K562 (cell line): ENCODE measurements at regions of chr4 and their contacts with region 1.

Region 1: GRCh38 chr4:6716018-6716911 is at the start of gene BLOC1S4:
- DNase-seq: peak; percentile 94 to 96 (median 95)
- ATAC-seq: peak; percentile 78
- H3K4me3 ChIP-seq: peak within 1 kb of the TSS; percentile 58
- H3K27ac ChIP-seq: peak within 1 kb of the TSS; percentile 94
- H3K4me1 ChIP-seq: peaks cover 22 to 23% of the 10 kb centered on the region in 2 experiments; a peak in 4 of 5 replicates
- H3K27me3 ChIP-seq: no peaks in the 10 kb centered on the region
- CTCF ChIP-seq: peak in 2 of 3 experiments; percentile 14 to 26; a peak in 2 of 6 replicates
- EP300 ChIP-seq: no peak
- POLR2A ChIP-seq: peak; percentile 81
- RAD21 ChIP-seq: 0 out of 4 replicates have a peak, but pooled peaks of 1 of the 2 experiments have one; percentile 13
- polyA plus RNA-seq, gene BLOC1S4: 3.1 to 3.9 TPM

Region 2: DNA sequence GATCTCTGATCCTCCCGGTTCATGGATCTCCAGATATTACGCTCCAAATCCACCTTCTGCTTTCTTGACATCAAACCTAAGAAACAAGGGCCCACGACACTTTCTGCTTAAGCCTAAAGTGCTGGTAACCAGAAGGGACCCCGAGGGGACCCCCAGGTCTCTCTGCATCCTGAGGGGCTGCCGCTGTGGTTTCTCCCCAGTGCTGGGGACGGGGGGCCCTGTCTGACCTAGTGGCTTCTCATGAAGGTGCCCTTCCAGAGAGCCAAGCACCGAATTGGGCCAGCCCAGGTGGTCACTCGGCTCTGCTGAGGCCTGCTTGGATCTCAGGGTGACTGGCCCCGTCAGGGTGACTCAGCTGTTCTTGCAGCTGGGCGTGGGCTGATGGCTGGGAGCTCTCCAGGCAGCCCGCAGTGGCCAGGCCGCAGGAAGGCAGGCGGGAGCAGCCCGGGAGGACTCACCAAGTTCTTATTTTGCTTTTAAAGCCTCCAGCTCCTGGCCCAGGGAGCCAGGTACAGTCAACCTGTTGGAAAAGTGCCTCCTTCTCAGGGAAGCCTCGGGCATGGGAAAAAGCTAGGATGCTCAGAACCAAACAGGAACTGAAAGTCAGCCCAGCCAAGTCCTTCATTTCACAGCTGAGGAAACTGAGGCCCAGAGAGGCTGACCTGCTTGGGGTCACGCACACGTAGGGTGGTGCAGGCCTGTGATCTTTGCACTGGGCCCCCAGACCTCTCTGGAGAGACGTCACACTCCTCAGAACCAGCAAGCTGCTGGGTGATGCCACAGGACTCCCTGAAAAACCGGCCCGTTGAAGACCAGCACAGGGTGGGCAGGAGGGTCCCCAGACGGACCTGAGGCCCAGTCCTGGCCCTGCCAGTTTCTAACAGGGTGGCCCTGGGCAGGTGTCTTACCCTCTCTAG is 16.4 kb after region 1 on chr4:
- CTCF ChIA-PET with region 1: no interaction called
- POLR2A ChIA-PET with region 1: interaction called, 12 read pairs
- in situ Hi-C with region 1: no loop called
- intact Hi-C with region 1: no loop called
- DNase-seq: peak; percentile 86 to 95 (median 89)
- ATAC-seq: peak; percentile 92
- H3K4me3 ChIP-seq: no peak overlapping the region
- H3K27ac ChIP-seq: peak overlapping the region; percentile 93
- H3K4me1 ChIP-seq: peaks cover 55 to 58% of the 10 kb centered on the region in 2 experiments
- H3K27me3 ChIP-seq: no peaks in the 10 kb centered on the region
- CTCF ChIP-seq: no peak
- EP300 ChIP-seq: peak; percentile 88
- POLR2A ChIP-seq: peak; percentile 80
- RAD21 ChIP-seq: peak in 1 of 2 experiments; percentile 39; a peak in 2 of 4 replicates

Region 3: DNA sequence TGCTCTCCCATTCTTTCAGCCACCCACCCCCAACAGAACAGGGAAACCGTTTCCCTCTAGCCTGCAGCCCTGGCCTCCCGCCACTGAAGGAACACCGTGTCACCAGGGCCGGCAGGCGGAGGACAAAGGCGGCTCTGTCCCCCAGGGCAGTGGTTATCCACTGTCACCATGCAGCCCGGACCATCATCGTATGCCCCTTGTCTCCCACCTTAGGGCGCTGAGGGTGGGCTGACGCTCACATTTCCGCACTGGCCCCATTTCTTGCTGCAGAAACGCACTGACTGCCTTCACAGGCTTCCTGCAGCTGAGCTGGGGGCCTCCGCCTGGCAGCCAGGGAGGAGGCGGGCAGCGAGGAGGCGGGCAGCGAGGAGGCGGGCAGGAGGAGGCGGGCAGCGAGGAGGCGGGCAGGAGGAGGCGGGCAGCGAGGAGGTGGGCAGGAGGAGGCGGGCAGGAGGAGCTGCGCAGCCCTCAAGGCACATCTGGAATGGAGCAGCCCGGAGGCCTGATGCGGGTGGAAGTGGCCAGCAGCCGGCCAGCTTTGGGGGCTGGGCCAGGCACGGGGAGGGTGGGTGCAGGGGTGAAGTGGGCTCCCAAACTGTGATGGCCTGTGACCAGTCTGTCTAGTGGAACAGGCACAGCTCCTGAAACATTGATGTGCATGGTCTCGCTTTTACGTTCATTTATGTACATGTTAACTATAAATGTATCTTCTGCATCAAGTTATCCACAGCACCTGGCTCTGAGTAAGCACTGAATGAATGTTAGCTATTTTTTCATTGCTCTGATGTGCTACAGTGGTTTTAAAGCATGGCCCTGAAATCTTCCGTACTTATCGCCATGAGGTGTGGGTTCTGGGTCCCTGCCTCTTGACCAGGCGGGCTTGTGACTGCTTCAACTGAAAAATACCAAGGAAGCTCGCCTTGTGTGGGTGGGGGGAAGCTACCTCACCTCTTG is 45.7 kb after region 1 on chr4:
- CTCF ChIA-PET with region 1: interaction called, 12 read pairs
- POLR2A ChIA-PET with region 1: no interaction called
- in situ Hi-C with region 1: loop called (anchors 5 kb)
- intact Hi-C with region 1: loop called (anchors 1 kb)
- DNase-seq: no peak
- ATAC-seq: no peak
- H3K4me3 ChIP-seq: no peak overlapping the region
- H3K27ac ChIP-seq: no peak overlapping the region
- H3K4me1 ChIP-seq: peaks cover 7 to 18% of the 10 kb centered on the region in 2 experiments; a peak in 4 of 5 replicates
- H3K27me3 ChIP-seq: no peaks in the 10 kb centered on the region
- CTCF ChIP-seq: no peak
- EP300 ChIP-seq: no peak
- POLR2A ChIP-seq: no peak
- RAD21 ChIP-seq: no peak

Region 4: DNA sequence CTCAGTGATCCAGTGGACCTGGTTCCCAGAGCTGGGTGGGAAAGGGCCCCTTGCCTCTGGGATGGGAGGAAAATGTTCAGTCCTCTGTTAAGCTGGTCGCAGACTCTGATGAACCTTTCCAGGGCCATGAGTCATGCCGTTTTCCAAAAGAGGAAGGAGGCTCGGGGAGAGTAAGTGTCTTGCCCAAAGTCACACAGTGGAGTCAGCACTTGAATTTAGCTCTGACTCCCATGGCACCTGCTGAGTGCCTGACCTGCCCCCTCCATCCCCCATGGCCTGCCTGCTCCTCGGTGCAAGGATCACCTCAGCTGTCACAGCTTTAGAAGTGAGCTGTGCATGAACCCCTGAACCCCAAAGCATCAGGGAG is 52.3 kb after region 1 on chr4:
- CTCF ChIA-PET with region 1: interaction called, 12 read pairs
- POLR2A ChIA-PET with region 1: no interaction called
- in situ Hi-C with region 1: loop called (anchors 5 kb)
- intact Hi-C with region 1: loop called (anchors 1 kb)
- DNase-seq: peak in 1 of 4 experiments; percentile 50
- ATAC-seq: peak; percentile 57
- H3K4me3 ChIP-seq: no peak overlapping the region
- H3K27ac ChIP-seq: no peak overlapping the region; the same call in 2 of the 3 replicates
- H3K4me1 ChIP-seq: peaks cover 14 to 22% of the 10 kb centered on the region in 2 experiments
- H3K27me3 ChIP-seq: 0 out of 5 replicates have a peak, but pooled peaks cover 0 to 8% of the 10 kb centered on the region in 2 experiments
- CTCF ChIP-seq: no peak
- EP300 ChIP-seq: no peak
- POLR2A ChIP-seq: no peak
- RAD21 ChIP-seq: no peak

Region 5: GRCh38 chr4:6873792-6874461 is 157.7 kb after region 1 on chr4:
- CTCF ChIA-PET with region 1: interaction called, 66 read pairs
- POLR2A ChIA-PET with region 1: interaction called, 6 read pairs
- in situ Hi-C with region 1: loop called (anchors 5 kb)
- intact Hi-C with region 1: loop called (anchors 1 kb)
- DNase-seq: peak; percentile 58 to 80 (median 68)
- ATAC-seq: peak; percentile 95
- H3K4me3 ChIP-seq: no peak overlapping the region
- H3K27ac ChIP-seq: no peak overlapping the region
- H3K4me1 ChIP-seq: no peaks in the 10 kb centered on the region; a peak in 1 of 5 replicates
- H3K27me3 ChIP-seq: no peaks in the 10 kb centered on the region
- CTCF ChIP-seq: peak; percentile 81 to 90 (median 89)
- EP300 ChIP-seq: no peak
- POLR2A ChIP-seq: no peak
- RAD21 ChIP-seq: peak; percentile 82 to 92

Region 6: DNA sequence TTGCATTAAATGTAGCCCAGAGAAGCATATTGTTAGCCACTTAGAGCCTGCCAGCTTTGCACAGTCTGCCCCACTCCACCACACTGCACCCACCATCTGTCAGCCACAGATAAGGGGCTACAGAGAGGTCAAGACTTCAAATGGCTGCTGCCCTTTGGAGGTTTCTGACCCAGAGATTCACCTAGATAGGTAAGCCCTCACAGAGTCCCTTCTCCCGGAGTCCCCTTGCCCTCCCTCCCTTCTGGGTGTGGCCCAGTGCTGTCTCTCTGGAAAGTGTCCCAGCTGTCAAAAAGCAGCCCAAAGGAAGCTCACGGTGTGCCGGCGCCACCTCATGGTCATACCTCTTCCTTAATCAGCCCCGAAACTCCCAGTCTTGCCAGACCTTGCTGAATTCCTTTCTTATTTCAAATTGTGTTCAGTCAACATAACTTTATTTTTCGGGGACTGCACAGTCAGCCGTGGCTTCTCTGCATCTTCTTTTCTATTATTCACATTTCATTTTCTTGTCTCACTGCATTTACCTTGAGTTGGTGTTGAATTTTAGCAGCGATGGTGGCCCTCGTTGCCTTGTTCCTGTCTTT is 365.7 kb after region 1 on chr4:
- CTCF ChIA-PET with region 1: interaction called, 15 read pairs
- POLR2A ChIA-PET with region 1: no interaction called
- in situ Hi-C with region 1: no loop called
- intact Hi-C with region 1: loop called (anchors 1 kb)
- DNase-seq: peak; percentile 87 to 95 (median 90)
- ATAC-seq: peak; percentile 98
- H3K4me3 ChIP-seq: no peak overlapping the region
- H3K27ac ChIP-seq: no peak overlapping the region
- H3K4me1 ChIP-seq: peaks cover 11 to 21% of the 10 kb centered on the region in 2 experiments; a peak in 4 of 5 replicates
- H3K27me3 ChIP-seq: no peaks in the 10 kb centered on the region
- CTCF ChIP-seq: peak; percentile 84 to 96 (median 89)
- EP300 ChIP-seq: peak; percentile 50; the same call in 1 of the 2 replicates
- POLR2A ChIP-seq: no peak
- RAD21 ChIP-seq: peak; percentile 84 to 90

Region 7: GRCh38 chr4:7295911-7296660 is 579.8 kb after region 1 on chr4:
- CTCF ChIA-PET with region 1: no interaction called
- POLR2A ChIA-PET with region 1: no interaction called
- in situ Hi-C with region 1: no loop called
- intact Hi-C with region 1: no loop called
- DNase-seq: peak; percentile 35 to 44 (median 36)
- ATAC-seq: peak; percentile 74
- H3K4me3 ChIP-seq: no peak overlapping the region
- H3K27ac ChIP-seq: no peak overlapping the region
- H3K4me1 ChIP-seq: no peaks in the 10 kb centered on the region
- H3K27me3 ChIP-seq: peaks cover 11 to 46% of the 10 kb centered on the region in 2 experiments; a peak in 4 of 5 replicates
- CTCF ChIP-seq: peak; percentile 57 to 68 (median 61)
- EP300 ChIP-seq: no peak
- POLR2A ChIP-seq: no peak
- RAD21 ChIP-seq: peak; percentile 47 to 66